ENCODE measurements at regions of chr14 and their contacts with region 1.

Region 1: GRCh38 chr14:67704484-67705089 is 2.9 kb downstream of the RDH12 start:
- DNase-seq: peak; percentile 68
- H3K4me3 ChIP-seq: no peak overlapping the region
- H3K27ac ChIP-seq: no peak overlapping the region
- H3K4me1 ChIP-seq: no peaks in the 10 kb centered on the region
- H3K27me3 ChIP-seq: peaks cover 0 to 6% of the 10 kb centered on the region in 2 experiments
- CTCF ChIP-seq: peak; percentile 52 to 61
- POLR2A ChIP-seq: no peak

Region 2: DNA sequence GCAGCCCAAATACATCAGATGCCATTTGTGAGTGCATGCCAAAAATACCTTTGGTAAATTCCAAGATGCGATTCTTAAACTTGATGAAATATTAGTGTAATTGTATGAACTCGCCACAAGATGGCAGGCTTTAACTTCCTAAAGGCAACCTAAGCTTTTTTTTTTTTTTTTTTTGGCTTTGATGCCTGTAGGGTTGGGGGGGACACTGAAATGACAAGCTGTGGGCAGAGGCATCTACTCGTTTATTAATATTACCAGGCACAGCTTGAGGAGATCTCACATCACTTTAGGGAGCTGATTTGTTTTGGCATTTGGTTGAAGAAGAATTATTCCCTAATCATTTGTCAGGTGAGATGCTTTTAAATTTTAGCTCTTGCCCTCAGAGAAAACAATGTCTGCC is 1345.1 kb before region 1 on chr14:
- CTCF ChIA-PET with region 1: interaction called, 21 read pairs
- POLR2A ChIA-PET with region 1: no interaction called
- dilution Hi-C with region 1: no loop called
- intact Hi-C with region 1: no loop called
- DNase-seq: peak; percentile 48
- H3K4me3 ChIP-seq: no peak overlapping the region
- H3K27ac ChIP-seq: no peak overlapping the region
- H3K4me1 ChIP-seq: no peaks in the 10 kb centered on the region
- H3K27me3 ChIP-seq: peaks cover 0 to 16% of the 10 kb centered on the region in 2 experiments
- CTCF ChIP-seq: peak; percentile 32 to 37
- POLR2A ChIP-seq: no peak

Region 3: GRCh38 chr14:67018720-67019119 is 685.9 kb before region 1 on chr14:
- CTCF ChIA-PET with region 1: no interaction called
- POLR2A ChIA-PET with region 1: no interaction called
- dilution Hi-C with region 1: no loop called
- intact Hi-C with region 1: no loop called
- DNase-seq: no peak
- H3K4me3 ChIP-seq: no peak overlapping the region
- H3K27ac ChIP-seq: no peak overlapping the region
- H3K4me1 ChIP-seq: no peaks in the 10 kb centered on the region
- H3K27me3 ChIP-seq: no peaks in the 10 kb centered on the region
- CTCF ChIP-seq: no peak
- POLR2A ChIP-seq: no peak

Region 4: GRCh38 chr14:67426983-67427606 is 277.5 kb before region 1 on chr14:
- CTCF ChIA-PET with region 1: interaction called, 77 read pairs
- POLR2A ChIA-PET with region 1: no interaction called
- dilution Hi-C with region 1: no loop called
- intact Hi-C with region 1: loop called (anchors 1 kb)
- DNase-seq: peak; percentile 67
- H3K4me3 ChIP-seq: no peak overlapping the region
- H3K27ac ChIP-seq: no peak overlapping the region
- H3K4me1 ChIP-seq: peaks cover 2% of the 10 kb centered on the region
- H3K27me3 ChIP-seq: peaks cover 1 to 2% of the 10 kb centered on the region in 2 experiments
- CTCF ChIP-seq: peak; percentile 73 to 78
- POLR2A ChIP-seq: no peak

Region 5: DNA sequence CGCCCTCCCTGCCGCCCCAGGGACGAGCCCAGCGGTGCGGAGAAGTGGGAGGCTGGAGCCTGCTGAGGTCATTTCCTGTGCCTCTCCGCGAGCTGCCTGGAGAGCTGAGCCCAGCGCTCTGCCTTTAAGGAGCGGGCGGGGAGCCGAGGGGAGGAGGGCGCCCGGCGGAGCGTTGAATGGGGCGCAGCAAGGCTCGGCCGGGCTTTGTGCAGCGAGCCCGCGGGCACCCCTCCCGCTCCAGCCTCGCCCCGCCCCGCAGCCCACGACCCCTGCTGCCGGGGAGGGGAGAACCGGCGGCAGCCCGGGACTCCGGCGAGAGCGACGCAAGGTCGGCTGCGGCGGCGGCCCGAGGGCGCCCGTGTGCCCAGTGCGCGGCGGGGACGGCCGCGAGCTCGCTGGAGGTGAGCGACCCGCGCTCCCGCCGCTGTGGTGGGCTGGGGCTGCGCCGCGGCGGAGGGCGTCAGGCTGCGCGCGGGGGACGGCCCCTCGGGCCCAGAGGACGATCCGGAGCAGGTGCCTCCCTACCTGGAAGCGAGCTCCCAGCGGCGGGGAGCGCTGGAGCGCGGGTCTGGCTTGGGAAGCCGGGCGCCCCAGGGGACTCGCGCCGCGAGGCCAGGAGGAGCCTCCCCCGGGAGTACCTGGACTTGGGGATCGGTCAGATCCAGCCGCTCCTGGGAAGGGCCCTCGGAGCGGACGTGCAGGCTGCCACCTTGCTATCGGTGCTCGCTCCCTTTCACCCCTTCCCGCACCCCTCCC is 171.4 kb before region 1 on chr14 and contains the start of gene PLEKHH1:
- CTCF ChIA-PET with region 1: interaction called, 14 read pairs
- POLR2A ChIA-PET with region 1: no interaction called
- dilution Hi-C with region 1: no loop called
- intact Hi-C with region 1: no loop called
- DNase-seq: peak; percentile 55
- H3K4me3 ChIP-seq: peak within 1 kb of the TSS; percentile 6 to 53 (median 29)
- H3K27ac ChIP-seq: no peak within 1 kb of the TSS
- H3K4me1 ChIP-seq: peaks cover 2% of the 10 kb centered on the region
- H3K27me3 ChIP-seq: peaks cover 18 to 32% of the 10 kb centered on the region in 2 experiments
- CTCF ChIP-seq: no peak
- POLR2A ChIP-seq: no peak
- total RNA-seq, gene PLEKHH1: 0.35 and 0.71 TPM in 2 replicates

Region 6: GRCh38 chr14:67599698-67600561 is 104.7 kb before region 1 on chr14 and contains the start of gene PIGH:
- CTCF ChIA-PET with region 1: interaction called, 59 read pairs
- POLR2A ChIA-PET with region 1: no interaction called
- dilution Hi-C with region 1: no loop called
- intact Hi-C with region 1: no loop called
- DNase-seq: peak; percentile 88
- H3K4me3 ChIP-seq: peak within 1 kb of the TSS; percentile 33 to 60 (median 54)
- H3K27ac ChIP-seq: no peak within 1 kb of the TSS
- H3K4me1 ChIP-seq: peaks cover 6% of the 10 kb centered on the region
- H3K27me3 ChIP-seq: peaks cover 0 to 4% of the 10 kb centered on the region in 2 experiments
- CTCF ChIP-seq: peak; percentile 41 to 80
- POLR2A ChIP-seq: peak; percentile 80
- total RNA-seq, gene PIGH: 9.9 and 12.3 TPM in 2 replicates

Region 7: GRCh38 chr14:67680121-67680602 is 24.4 kb before region 1 on chr14:
- CTCF ChIA-PET with region 1: interaction called, 181 read pairs
- POLR2A ChIA-PET with region 1: no interaction called
- dilution Hi-C with region 1: no loop called
- intact Hi-C with region 1: loop called (anchors 2 kb)
- DNase-seq: peak; percentile 73
- H3K4me3 ChIP-seq: no peak overlapping the region
- H3K27ac ChIP-seq: peak overlapping the region; percentile 48
- H3K4me1 ChIP-seq: peaks cover 21% of the 10 kb centered on the region
- H3K27me3 ChIP-seq: no peaks in the 10 kb centered on the region
- CTCF ChIP-seq: no peak
- POLR2A ChIP-seq: no peak

Region 8: DNA sequence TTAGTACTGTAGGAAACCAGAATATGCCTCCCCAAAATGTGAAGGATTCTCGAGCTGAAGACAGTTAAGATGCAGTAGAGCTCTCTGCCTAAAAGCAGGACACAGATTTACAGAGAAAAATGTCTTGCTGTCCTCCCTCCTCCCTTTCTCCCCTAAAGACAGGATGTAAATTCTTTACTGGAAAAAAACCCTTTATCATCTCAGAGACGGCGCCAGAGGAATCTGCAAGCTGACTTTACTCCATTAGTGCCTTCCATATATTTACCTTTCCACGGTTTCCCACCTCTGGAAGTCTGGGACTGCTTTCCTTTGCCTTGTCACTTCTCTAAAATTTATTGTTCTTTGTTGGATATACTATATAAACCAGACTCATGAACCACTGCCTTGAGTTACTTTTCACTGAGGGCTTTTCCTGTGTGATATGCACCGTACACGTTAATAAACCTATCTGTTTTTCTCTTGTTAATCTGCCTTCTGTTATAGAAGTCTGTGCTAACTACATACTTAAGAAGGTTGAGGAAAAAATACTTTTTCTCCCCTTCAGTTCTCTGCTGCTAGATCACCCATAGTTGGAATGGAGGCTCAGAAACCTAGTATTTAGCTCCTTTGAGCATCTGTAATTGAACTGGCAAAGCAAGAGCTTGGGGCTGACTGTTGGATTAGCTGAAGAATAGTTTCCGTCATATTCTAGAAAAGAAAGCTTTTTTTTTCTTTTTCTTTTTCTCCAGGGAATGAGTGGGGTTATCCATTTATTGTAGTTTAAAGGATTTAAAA is 214.9 kb after region 1 on chr14:
- CTCF ChIA-PET with region 1: no interaction called
- POLR2A ChIA-PET with region 1: no interaction called
- dilution Hi-C with region 1: no loop called
- intact Hi-C with region 1: no loop called
- DNase-seq: peak; percentile 12
- H3K4me3 ChIP-seq: no peak overlapping the region
- H3K27ac ChIP-seq: no peak overlapping the region
- H3K4me1 ChIP-seq: no peaks in the 10 kb centered on the region
- H3K27me3 ChIP-seq: no peaks in the 10 kb centered on the region
- CTCF ChIP-seq: no peak
- POLR2A ChIP-seq: no peak

Measured in endothelial cell of umbilical vein (primary cell).